Lower leg skin (tissue), 4 donors: ENCODE measurements at regions of chrX and their contacts with region 1.

Region 1: DNA sequence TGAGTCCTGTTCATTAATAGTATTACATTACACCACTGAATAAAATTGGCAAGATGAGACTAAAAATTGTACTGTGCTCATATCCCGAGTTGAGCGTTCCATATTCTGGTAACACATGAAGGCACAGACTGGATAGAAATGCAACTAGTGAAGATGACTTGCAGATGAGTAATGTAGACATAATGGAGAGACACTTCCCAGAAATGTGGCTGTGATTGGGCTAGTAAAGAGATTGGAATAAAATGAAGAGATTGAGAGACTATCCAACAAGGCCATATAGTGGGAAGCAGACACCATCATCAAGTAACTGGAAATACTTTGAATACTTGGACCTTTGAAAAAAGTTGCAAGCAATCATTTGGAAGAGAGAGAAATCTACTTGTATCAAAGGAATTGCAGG is 77.3 kb downstream of the DCAF8L1 start:
- DNase-seq: no peak
- H3K4me3 ChIP-seq: no peak overlapping the region
- CTCF ChIP-seq: no peak
- POLR2A ChIP-seq: no peak

Region 2: DNA sequence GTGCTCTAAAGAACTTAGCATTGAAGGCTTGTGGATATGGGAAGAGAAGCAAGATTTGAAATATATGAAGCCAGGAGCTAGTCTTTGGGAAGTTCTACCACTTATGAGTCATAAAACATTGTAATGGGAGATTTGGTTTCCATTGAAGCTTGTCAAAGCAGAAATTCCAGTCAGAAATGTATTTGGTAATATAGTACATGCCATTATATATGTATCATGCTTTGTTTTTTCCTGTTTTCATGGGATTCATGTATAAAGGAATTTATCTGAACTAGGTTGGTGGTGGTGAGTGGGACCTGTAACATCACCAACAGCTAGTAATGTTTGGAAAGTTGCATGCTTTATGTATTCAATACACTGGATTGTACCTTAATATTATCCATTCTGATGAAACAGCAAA is 328.4 kb before region 1 on chrX:
- intact Hi-C with region 1: no loop called
- DNase-seq: no peak
- H3K4me3 ChIP-seq: no peak overlapping the region
- CTCF ChIP-seq: no peak
- POLR2A ChIP-seq: no peak

Region 3: GRCh38 chrX:28670074-28670473 is 766.1 kb after region 1 on chrX:
- intact Hi-C with region 1: loop called (anchors 5 kb)
- DNase-seq: no peak
- H3K4me3 ChIP-seq: no peak overlapping the region
- CTCF ChIP-seq: no peak
- POLR2A ChIP-seq: no peak